Panc1 (cell line): ENCODE measurements at regions of chr4 and their contacts with region 1.

Region 1: GRCh38 chr4:142358656-142359055 is 487.4 kb downstream of the INPP4B start:
- DNase-seq: no peak
- ATAC-seq: no peak
- H3K4me3 ChIP-seq: no peak overlapping the region
- H3K27ac ChIP-seq: no peak overlapping the region
- H3K4me1 ChIP-seq: peaks cover 9% of the 10 kb centered on the region; the same call in 1 of the 2 replicates
- H3K27me3 ChIP-seq: no peaks in the 10 kb centered on the region
- CTCF ChIP-seq: no peak

Region 2: DNA sequence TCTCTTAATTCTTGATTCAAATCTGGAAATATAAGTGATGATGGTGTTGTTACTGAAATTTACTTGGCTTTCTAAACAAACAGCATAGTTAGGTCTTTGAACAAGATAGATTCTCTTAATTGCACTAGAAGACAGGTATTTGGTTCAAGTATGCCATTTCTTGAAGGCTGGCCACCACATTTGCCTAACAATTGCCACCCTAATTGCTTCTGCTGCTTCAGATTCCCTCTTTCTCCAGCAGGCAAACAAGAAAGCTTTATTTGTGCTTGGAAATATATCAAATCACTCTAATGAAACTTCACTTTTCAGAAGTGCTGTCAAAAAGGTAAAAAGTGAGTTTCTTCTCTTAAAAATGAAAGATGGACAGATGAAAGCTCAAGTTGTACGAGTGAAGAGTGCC is 68.8 kb after region 1 on chr4:
- CTCF ChIA-PET with region 1: no interaction called
- POLR2A ChIA-PET with region 1: no interaction called
- in situ Hi-C with region 1: no loop called
- intact Hi-C with region 1: no loop called
- DNase-seq: no peak
- ATAC-seq: no peak
- H3K4me3 ChIP-seq: no peak overlapping the region
- H3K27ac ChIP-seq: no peak overlapping the region
- H3K4me1 ChIP-seq: no peaks in the 10 kb centered on the region
- H3K27me3 ChIP-seq: no peaks in the 10 kb centered on the region
- CTCF ChIP-seq: no peak

Region 3: DNA sequence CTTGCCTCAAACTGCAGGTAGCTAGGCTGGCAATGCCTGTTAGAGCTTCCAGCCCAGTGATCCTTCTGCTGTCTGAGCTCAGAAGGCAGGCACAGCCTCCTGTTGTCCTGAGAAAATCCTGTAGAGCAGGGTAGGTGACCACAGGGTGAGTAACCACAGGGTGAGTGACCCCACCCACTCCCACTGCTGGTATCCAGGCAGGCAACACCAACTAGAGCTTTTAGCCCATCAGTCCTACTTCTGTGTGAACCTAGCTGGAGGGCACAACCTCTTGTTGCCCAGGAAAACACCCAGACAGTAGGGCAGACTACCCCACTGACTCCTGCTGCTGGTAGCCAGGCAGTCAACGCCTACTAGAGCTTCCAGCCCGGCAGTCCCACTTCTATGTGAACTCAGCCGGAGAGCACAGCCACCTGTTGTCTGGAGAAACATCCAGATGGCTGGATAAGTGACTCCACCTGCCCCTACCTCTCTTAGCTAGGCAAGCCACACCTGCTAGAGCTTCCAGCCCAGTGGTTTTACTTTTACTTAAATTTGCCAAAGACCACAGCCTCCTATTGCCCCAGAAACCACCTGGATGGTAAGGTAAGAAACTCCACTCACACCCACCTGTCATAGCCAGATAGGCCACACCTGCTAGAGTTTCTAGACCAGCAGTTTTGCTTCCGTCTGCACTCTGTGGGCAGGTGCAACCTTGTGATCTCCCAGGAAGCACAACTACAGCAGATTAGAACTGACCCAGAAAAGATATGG is 115.9 kb after region 1 on chr4:
- CTCF ChIA-PET with region 1: no interaction called
- POLR2A ChIA-PET with region 1: no interaction called
- in situ Hi-C with region 1: no loop called
- intact Hi-C with region 1: no loop called
- DNase-seq: no peak
- ATAC-seq: no peak
- H3K4me3 ChIP-seq: no peak overlapping the region
- H3K27ac ChIP-seq: no peak overlapping the region
- H3K4me1 ChIP-seq: no peaks in the 10 kb centered on the region
- H3K27me3 ChIP-seq: no peaks in the 10 kb centered on the region
- CTCF ChIP-seq: no peak

Region 4: GRCh38 chr4:142607976-142608375 is 249.3 kb after region 1 on chr4:
- CTCF ChIA-PET with region 1: no interaction called
- POLR2A ChIA-PET with region 1: no interaction called
- in situ Hi-C with region 1: no loop called
- intact Hi-C with region 1: no loop called
- DNase-seq: no peak
- ATAC-seq: no peak
- H3K4me3 ChIP-seq: no peak overlapping the region
- H3K27ac ChIP-seq: no peak overlapping the region
- H3K4me1 ChIP-seq: no peaks in the 10 kb centered on the region
- H3K27me3 ChIP-seq: no peaks in the 10 kb centered on the region
- CTCF ChIP-seq: no peak

Region 5: DNA sequence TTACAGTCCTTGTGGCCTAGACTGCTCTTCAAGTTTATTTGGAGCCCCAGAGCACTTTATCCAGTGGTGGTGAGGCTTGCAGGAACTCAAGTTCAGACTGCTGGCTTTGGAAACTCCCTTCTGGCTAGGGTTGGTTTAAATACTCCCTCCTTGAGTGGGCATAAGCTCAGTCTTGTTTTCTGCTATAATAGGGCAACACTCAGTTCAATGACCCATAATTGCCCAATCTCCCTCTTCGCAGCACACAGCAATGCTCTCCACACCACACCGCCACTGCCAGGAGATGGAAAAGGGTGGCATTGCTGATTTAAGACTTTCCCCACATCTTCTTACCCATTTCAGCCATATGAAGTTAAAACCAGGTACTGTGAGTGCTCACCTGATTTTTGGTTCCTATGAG is 798.2 kb after region 1 on chr4:
- CTCF ChIA-PET with region 1: no interaction called
- POLR2A ChIA-PET with region 1: interaction called, 10 read pairs
- in situ Hi-C with region 1: no loop called
- intact Hi-C with region 1: no loop called
- DNase-seq: no peak
- ATAC-seq: no peak
- H3K4me3 ChIP-seq: no peak overlapping the region
- H3K27ac ChIP-seq: no peak overlapping the region
- H3K4me1 ChIP-seq: no peaks in the 10 kb centered on the region
- H3K27me3 ChIP-seq: no peaks in the 10 kb centered on the region
- CTCF ChIP-seq: no peak